Head of caudate nucleus (tissue), 42 donors: ENCODE measurements at regions of chr5 and their contacts with region 1.

Region 1: DNA sequence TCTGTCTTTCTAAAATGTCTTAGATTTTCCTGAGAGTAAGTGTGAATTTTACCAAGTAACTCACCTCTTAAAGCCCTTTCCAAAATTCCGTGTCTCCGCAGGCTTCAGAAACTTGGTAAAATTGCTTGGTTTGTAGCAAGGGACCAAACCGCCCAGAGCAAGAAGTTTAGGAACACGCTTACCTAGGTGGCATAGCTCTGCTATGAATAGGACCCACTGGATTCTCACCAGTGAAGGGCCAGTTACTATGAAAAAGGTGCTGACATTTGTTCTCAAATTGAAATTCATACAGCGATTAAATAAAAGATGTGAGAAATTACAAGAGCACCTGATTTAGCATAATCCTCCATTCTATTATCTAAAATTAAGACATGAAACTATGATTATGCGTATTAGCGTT is 6.7 kb downstream of the NME5 start:
- DNase-seq: no peak

Region 2: GRCh38 chr5:138035605-138036537 is 96.7 kb before region 1 on chr5:
- intact Hi-C with region 1: no loop called
- DNase-seq: peak; percentile 20 to 87 (median 68)

Region 3: GRCh38 chr5:138093036-138093435 is 39.5 kb before region 1 on chr5:
- intact Hi-C with region 1: loop called (anchors 5 kb)
- DNase-seq: no peak

Region 4: DNA sequence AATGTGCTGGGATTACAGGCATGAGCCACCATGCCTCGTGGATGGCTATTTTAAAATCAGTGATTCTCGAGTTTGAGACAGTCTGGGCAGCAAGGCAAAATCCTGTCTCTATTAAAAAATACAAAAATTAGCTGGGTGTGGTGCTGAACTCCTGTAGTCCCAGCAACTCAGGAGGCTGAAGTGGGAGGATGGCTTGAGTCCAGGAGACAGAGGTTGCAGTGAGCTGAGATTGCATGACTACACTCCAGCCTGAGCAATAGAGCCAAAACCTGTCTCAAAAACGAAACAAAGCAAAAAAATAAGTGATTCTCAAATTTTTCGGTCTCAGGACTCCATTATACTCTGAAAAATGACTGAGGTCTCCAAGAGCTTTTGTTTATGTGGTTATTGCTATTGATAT is 490.5 kb after region 1 on chr5:
- intact Hi-C with region 1: no loop called
- DNase-seq: peak in 1 of 42 donors; percentile 5